ENCODE measurements at regions of chr16 and their contacts with region 1.

Region 1: DNA sequence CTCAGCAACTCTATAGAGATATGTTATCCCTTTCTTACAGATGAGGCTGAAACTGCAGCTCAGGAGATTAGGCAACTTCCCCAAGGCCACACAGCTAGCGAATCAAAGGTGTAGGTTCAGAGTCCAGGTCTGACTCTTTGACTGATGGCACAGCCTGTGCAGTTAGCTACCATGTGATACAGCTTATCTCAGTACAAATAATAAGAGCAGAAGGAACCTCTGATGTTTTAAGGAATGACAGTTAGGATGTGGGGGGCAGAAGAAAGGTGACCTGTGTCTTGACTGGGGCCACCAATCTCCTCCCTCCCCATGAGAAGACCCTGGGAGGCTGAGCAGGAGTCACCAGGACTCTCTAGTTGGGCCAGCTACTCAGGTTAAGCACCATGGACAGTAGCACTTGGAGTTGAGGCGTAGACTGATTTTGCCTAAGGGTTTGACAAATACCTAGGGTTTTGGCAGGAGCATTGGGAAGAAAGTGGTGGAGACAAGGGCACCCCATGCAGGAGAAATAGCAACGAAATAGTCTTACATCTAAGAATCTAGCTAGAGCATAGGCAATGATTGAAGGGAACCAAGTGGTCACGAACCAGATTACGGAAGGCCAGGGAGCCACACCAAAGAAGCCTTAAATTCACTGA is 22.8 kb upstream of the ACSM2B start:
- DNase-seq: no peak
- H3K4me3 ChIP-seq: no peak overlapping the region
- H3K27ac ChIP-seq: no peak overlapping the region
- H3K4me1 ChIP-seq: no peaks in the 10 kb centered on the region
- H3K27me3 ChIP-seq: no peaks in the 10 kb centered on the region
- CTCF ChIP-seq: no peak

Region 2: GRCh38 chr16:20707461-20707860 is 108.5 kb after region 1 on chr16:
- CTCF ChIA-PET with region 1: no interaction called
- dilution Hi-C with region 1: no loop called
- in situ Hi-C with region 1: no loop called
- intact Hi-C with region 1: loop called (anchors 1 kb)
- DNase-seq: no peak
- H3K4me3 ChIP-seq: no peak overlapping the region
- H3K27ac ChIP-seq: no peak overlapping the region
- H3K4me1 ChIP-seq: no peaks in the 10 kb centered on the region
- H3K27me3 ChIP-seq: no peaks in the 10 kb centered on the region
- CTCF ChIP-seq: no peak

Region 3: GRCh38 chr16:20879175-20880040 is 280.5 kb after region 1 on chr16:
- CTCF ChIA-PET with region 1: no interaction called
- dilution Hi-C with region 1: no loop called
- in situ Hi-C with region 1: no loop called
- intact Hi-C with region 1: no loop called
- DNase-seq: peak; percentile 61
- H3K4me3 ChIP-seq: no peak overlapping the region
- H3K27ac ChIP-seq: peak overlapping the region; percentile 61
- H3K4me1 ChIP-seq: peaks cover 30% of the 10 kb centered on the region
- H3K27me3 ChIP-seq: no peaks in the 10 kb centered on the region
- CTCF ChIP-seq: no peak

Region 4: GRCh38 chr16:20956319-20956718 is 357.4 kb after region 1 on chr16:
- CTCF ChIA-PET with region 1: no interaction called
- dilution Hi-C with region 1: no loop called
- in situ Hi-C with region 1: no loop called
- intact Hi-C with region 1: no loop called
- DNase-seq: no peak
- H3K4me3 ChIP-seq: no peak overlapping the region
- H3K27ac ChIP-seq: no peak overlapping the region
- H3K4me1 ChIP-seq: no peaks in the 10 kb centered on the region
- H3K27me3 ChIP-seq: no peaks in the 10 kb centered on the region
- CTCF ChIP-seq: no peak

Measured in mammary epithelial cell (primary cell).